Thyroid gland (tissue), 4 donors: ENCODE measurements at regions of chr1 and their contacts with region 1.

Region 1: GRCh38 chr1:149931212-149931790 is 3.7 kb upstream of the SF3B4 start:
- DNase-seq: no peak
- H3K4me3 ChIP-seq: no peak overlapping the region
- H3K27ac ChIP-seq: no peak overlapping the region
- H3K4me1 ChIP-seq: peaks cover 8 to 13% of the 10 kb centered on the region in 2 donors
- H3K27me3 ChIP-seq: no peaks in the 10 kb centered on the region
- CTCF ChIP-seq: no peak
- POLR2A ChIP-seq: no peak

Region 2: GRCh38 chr1:149899460-149900293 is 31.6 kb before region 1 on chr1 and contains the start of gene BOLA1:
- intact Hi-C with region 1: loop called (anchors 5 kb)
- DNase-seq: peak; percentile 93 to 95
- H3K4me3 ChIP-seq: peak within 1 kb of the TSS; percentile 50 to 75 (median 51)
- H3K27ac ChIP-seq: peak within 1 kb of the TSS; percentile 84 to 89 (median 87)
- H3K4me1 ChIP-seq: peaks cover 7 to 9% of the 10 kb centered on the region in 2 donors
- H3K27me3 ChIP-seq: no peaks in the 10 kb centered on the region
- CTCF ChIP-seq: peak in 1 of 6 experiments; percentile 25
- POLR2A ChIP-seq: peak in 1 of 2 donors; percentile 92
- total RNA-seq, gene BOLA1: 23.5 to 55.8 (median 31.6) TPM